A673 (cell line): ENCODE measurements at regions of chr7 and their contacts with region 1.

Region 1: DNA sequence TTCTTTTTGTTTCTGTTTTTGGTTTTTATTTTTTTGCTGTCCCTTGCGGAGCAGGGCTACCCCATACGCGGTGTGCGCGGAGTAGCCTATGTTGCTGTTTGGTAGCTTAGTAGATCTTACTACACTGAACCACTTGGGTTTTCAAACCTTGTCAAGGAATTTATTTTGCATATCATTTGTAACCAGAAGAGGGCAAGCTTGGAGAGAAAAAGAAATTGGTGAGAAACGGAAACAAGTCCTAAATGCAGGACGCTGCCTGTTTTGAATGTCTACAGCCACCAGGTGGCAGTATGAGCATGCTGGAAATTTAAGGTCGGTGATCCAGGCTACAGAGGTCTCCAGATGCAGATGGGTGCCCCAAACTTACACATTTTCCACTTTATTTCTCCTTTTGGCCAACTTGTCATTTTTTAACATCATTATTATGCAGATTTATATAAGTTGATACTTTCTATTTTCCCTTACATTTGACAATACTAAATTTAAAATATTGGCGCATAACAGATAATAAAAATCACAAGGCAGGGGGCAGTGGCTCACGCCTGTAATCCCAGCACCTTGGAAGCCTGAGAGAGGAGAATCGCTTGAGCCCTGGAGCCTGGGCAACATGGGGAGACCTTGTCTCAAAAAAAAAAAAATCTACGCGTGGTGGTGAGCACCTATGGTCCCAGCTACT is 15.3 kb upstream of the TRA2A start:
- DNase-seq: peak; percentile 94
- H3K4me3 ChIP-seq: no peak overlapping the region
- H3K27ac ChIP-seq: no peak overlapping the region
- H3K4me1 ChIP-seq: no peaks in the 10 kb centered on the region
- H3K27me3 ChIP-seq: no peaks in the 10 kb centered on the region
- CTCF ChIP-seq: peak; percentile 97

Region 2: DNA sequence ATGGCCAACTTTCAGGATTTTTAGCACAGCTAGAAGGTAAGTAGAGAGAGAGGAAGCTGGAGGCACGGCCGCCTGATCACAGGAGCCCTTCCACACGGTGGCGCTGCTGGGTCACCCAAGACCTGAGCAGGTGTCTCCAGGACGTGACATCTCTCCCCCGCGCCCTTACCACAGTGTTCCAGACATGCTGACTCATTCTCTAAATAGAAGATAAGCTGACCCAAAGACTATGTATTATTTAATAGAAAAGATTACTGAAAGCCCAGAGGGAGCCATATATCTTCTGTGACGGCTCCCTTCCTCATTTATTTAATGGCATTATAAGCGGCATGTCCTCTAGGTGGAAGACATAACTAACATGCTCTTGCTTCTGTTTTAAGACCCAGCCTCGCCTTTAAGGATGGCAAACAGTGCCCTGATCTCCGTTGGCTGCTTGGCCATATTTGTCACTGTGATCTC is 273.9 kb before region 1 on chr7:
- CTCF ChIA-PET with region 1: interaction called, 8 read pairs
- POLR2A ChIA-PET with region 1: no interaction called
- intact Hi-C with region 1: loop called (anchors 2 kb)
- DNase-seq: peak; percentile 93
- H3K4me3 ChIP-seq: peak overlapping the region; percentile 5
- H3K27ac ChIP-seq: no peak overlapping the region
- H3K4me1 ChIP-seq: peaks cover 8% of the 10 kb centered on the region
- H3K27me3 ChIP-seq: no peaks in the 10 kb centered on the region
- CTCF ChIP-seq: peak; percentile 92

Region 3: GRCh38 chr7:23570592-23571200 is 23.7 kb after region 1 on chr7:
- CTCF ChIA-PET with region 1: interaction called, 10 read pairs
- POLR2A ChIA-PET with region 1: no interaction called
- intact Hi-C with region 1: no loop called
- DNase-seq: peak; percentile 85
- H3K4me3 ChIP-seq: no peak overlapping the region
- H3K27ac ChIP-seq: no peak overlapping the region
- H3K4me1 ChIP-seq: no peaks in the 10 kb centered on the region
- H3K27me3 ChIP-seq: no peaks in the 10 kb centered on the region
- CTCF ChIP-seq: peak; percentile 86

Region 4: DNA sequence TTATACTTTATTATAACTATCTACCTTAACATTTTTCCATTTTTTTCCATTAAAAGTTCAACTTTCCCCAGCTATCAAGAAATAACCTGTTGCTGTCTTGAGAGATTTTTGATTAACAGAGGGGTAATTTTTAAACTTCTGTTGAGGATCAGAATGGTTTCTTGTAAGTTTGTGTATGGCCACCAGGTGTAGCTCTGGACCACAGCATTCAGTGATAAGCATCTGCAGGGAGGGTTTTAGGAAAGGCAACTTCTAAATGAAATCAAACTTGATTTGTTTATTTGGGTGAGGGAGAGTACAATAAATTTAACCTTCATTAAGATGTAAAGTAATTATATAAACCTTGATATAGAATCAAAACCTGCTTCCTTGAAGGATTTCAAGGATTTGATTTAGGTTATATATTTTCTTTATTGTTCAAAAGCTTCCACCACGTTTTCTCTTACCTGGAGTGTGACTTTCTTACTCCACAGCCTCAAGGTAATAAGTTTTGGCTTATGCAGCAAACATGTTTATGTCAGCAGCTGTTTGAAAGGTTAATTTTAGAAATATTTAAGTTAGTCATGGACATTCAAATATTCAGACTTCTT is 316.3 kb after region 1 on chr7:
- CTCF ChIA-PET with region 1: no interaction called
- POLR2A ChIA-PET with region 1: no interaction called
- intact Hi-C with region 1: no loop called
- DNase-seq: peak; percentile 65
- H3K4me3 ChIP-seq: no peak overlapping the region
- H3K27ac ChIP-seq: no peak overlapping the region
- H3K4me1 ChIP-seq: no peaks in the 10 kb centered on the region
- H3K27me3 ChIP-seq: no peaks in the 10 kb centered on the region
- CTCF ChIP-seq: peak; percentile 77